ENCODE measurements at regions of chr1 and their contacts with region 1.

Region 1: GRCh38 chr1:212455803-212456528 is 23.2 kb downstream of the NENF start:
- DNase-seq: peak; percentile 85
- H3K4me3 Mint-ChIP-seq: no peak overlapping the region
- H3K27ac Mint-ChIP-seq: no peak overlapping the region
- H3K4me1 Mint-ChIP-seq: peaks cover 4% of the 10 kb centered on the region
- H3K27me3 Mint-ChIP-seq: no peaks in the 10 kb centered on the region

Region 2: DNA sequence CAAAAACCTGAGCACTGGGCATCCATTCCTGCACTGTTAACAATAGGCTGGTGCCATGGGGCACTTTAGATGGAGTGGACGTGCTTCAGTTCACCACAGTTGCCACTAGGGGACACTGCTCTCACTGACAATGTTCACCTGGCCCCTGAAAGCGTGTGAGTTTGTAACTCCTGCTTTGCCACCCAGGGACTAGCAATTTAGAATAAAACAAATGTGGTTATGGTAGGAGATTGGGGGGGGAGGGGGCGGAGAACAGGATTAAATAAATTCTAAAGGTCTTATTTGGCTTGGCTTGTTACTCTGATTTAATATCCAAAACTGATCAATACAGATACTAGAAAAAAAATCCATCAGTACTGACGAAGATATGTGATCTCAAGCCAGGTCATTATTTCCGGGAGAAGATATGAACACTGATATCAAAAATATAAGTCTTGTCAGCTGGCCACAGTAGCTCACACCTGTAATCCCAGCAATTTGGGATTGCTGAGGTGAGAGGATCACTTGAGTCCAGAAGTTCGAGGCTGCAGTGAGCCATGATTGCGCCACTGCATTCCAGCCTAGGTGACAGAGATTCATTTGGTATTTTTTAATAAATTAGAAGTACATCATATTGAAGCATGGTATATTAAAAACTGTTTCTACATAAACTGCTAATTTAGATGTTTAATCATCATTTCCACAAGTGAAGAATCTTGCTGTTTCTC is 443.8 kb before region 1 on chr1:
- CTCF ChIA-PET with region 1: interaction called, 21 read pairs
- POLR2A ChIA-PET with region 1: no interaction called
- DNase-seq: peak; percentile 72
- H3K4me3 Mint-ChIP-seq: no peak overlapping the region
- H3K27ac Mint-ChIP-seq: no peak overlapping the region
- H3K4me1 Mint-ChIP-seq: no peaks in the 10 kb centered on the region
- H3K27me3 Mint-ChIP-seq: no peaks in the 10 kb centered on the region

Region 3: GRCh38 chr1:212311846-212312497 is 144.0 kb before region 1 on chr1:
- CTCF ChIA-PET with region 1: interaction called, 11 read pairs
- POLR2A ChIA-PET with region 1: no interaction called
- DNase-seq: no peak
- H3K4me3 Mint-ChIP-seq: no peak overlapping the region
- H3K27ac Mint-ChIP-seq: no peak overlapping the region
- H3K4me1 Mint-ChIP-seq: peaks cover 13% of the 10 kb centered on the region
- H3K27me3 Mint-ChIP-seq: no peaks in the 10 kb centered on the region

Region 4: GRCh38 chr1:212396638-212397037 is 59.3 kb before region 1 on chr1:
- CTCF ChIA-PET with region 1: interaction called, 15 read pairs
- POLR2A ChIA-PET with region 1: interaction called, 3 read pairs
- DNase-seq: no peak
- H3K4me3 Mint-ChIP-seq: no peak overlapping the region
- H3K27ac Mint-ChIP-seq: no peak overlapping the region
- H3K4me1 Mint-ChIP-seq: no peaks in the 10 kb centered on the region
- H3K27me3 Mint-ChIP-seq: no peaks in the 10 kb centered on the region

Region 5: DNA sequence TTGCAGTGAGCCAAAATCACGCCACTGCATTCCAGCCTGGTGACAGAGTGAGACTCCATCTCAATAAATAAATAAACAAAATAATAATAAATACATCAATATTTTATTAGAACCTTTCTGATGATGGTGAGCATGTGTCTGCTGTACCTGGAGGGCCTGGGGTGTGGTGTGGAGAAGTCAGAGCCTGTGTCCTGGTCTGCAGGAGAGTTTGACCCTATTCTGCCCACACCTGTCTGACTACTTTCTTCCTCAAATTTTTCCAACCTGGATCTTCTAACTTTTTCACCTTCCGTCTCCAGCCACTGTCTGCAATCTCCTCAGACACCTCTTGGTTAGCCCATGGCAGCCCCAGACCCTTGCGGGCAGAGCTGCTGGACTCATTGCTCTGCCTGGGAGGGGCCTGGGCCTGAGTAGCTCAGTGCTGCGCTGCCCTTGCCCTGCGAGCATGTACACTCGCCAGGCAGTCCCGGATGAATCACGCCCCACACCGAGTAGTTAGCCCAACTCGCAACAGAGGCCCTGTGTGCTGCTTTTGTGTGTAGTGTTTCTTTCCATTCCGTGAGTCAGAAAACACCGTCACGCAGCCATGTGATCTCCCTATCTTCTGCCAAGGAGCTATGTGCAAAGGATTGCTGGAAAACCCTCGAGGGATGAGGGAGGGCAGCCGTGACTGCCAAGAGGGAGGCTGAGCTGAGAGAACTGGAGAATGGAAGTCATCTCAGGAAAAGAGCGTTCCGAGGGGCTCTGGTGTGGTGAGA is 13.9 kb after region 1 on chr1:
- CTCF ChIA-PET with region 1: interaction called, 54 read pairs
- POLR2A ChIA-PET with region 1: no interaction called
- DNase-seq: no peak
- H3K4me3 Mint-ChIP-seq: no peak overlapping the region
- H3K27ac Mint-ChIP-seq: no peak overlapping the region
- H3K4me1 Mint-ChIP-seq: peaks cover 7% of the 10 kb centered on the region
- H3K27me3 Mint-ChIP-seq: no peaks in the 10 kb centered on the region

Region 6: GRCh38 chr1:212777151-212777550 is 321.2 kb after region 1 on chr1:
- CTCF ChIA-PET with region 1: interaction called, 14 read pairs
- POLR2A ChIA-PET with region 1: no interaction called
- DNase-seq: no peak
- H3K4me3 Mint-ChIP-seq: no peak overlapping the region
- H3K27ac Mint-ChIP-seq: no peak overlapping the region
- H3K4me1 Mint-ChIP-seq: peaks cover 2% of the 10 kb centered on the region
- H3K27me3 Mint-ChIP-seq: no peaks in the 10 kb centered on the region

Measured in activated CD4-positive, alpha-beta memory T cell treated with anti-CD3 and anti-CD28 coated beads, Interleukin-2, amount 10 ng/mL, durations not matched to agents 7 days and 5 days (primary cell).